HCT116 (cell line): ENCODE measurements at regions of chr7 and their contacts with region 1.

Region 1: DNA sequence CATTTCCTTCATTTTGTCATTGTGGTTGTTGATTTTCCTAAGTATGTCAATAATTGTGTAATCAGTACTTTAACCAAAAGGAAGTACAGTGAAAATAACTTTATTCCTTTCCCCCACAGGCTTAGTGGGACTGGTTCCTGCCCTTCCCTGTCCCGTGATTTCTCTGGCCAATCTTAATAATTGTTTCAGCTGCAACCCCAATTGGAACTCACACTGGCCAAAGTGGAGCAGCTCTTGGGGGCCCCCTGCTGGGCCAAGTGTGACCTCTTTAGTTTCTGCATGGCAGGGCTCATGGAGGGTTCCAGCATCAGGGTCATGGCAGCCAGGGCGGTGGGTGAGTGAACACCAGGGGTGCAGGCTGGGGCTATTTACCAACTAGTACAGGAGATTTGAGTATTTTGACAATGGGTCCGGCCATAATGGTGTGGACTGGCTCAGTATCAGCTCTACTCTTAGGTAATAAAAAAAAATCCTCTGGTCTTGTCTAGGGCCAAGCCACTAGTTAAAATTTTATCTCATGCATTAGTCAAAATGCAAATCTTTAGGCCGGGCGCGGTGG is 31.7 kb downstream of the CYCS start:
- DNase-seq: peak; percentile 70
- ATAC-seq: peak; percentile 88
- H3K4me3 ChIP-seq: no peak overlapping the region
- H3K27ac ChIP-seq: no peak overlapping the region
- H3K4me1 ChIP-seq: peaks cover 2 to 30% of the 10 kb centered on the region in 2 experiments; a peak in 3 of 4 replicates
- H3K27me3 ChIP-seq: no peaks in the 10 kb centered on the region
- CTCF ChIP-seq: peak; percentile 84 to 92 (median 91)
- POLR2A ChIP-seq: no peak
- RAD21 ChIP-seq: peak; percentile 84

Region 2: DNA sequence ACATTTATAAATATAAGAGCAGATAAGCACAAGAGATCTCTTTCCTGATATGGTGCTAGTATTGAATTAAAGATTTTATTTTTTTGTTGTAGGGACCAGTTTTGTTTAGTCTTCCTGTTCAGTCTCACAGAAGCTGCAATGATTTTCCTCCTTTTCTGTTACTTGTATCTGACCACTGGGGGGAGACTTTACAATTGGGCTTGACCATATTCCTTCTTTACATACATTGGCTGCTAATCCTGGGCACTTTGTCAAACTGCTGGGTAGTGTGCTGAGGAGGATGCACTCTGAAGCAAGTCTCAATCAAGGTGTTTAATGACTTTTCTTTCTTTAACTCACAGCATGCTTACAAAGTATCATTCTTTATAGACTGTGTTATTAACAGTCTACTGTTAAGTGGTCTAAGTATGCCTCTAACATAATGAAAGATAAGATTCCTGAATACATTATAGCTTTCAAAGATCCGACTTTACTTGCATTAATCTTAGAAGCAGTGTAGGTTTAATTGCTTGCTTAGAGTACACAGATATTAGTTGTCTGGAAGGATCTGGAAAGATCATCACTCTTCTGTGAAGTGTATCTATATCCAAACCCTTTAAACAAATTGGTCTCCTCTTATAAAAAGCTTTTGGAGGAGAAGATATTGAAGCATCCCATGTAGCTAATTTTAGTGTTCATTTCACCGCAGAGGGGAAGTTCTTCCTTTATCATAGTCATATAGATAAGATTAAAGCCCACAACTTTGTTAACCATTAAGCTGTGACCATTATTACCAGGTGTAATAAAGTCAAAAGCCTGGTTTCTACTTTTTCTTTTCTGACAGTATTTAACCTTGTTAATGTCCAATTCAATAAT is 516.9 kb before region 1 on chr7:
- CTCF ChIA-PET with region 1: no interaction called
- POLR2A ChIA-PET with region 1: no interaction called
- RAD21 ChIA-PET with region 1: no interaction called
- intact Hi-C with region 1: loop called (anchors 5 kb)
- DNase-seq: peak; percentile 48
- ATAC-seq: 0 out of 2 replicates have a peak, but pooled peaks have one; percentile 18
- H3K4me3 ChIP-seq: no peak overlapping the region
- H3K27ac ChIP-seq: no peak overlapping the region
- H3K4me1 ChIP-seq: peaks cover 8 to 24% of the 10 kb centered on the region in 2 experiments; a peak in 3 of 4 replicates
- H3K27me3 ChIP-seq: no peaks in the 10 kb centered on the region
- CTCF ChIP-seq: peak; percentile 59 to 72 (median 67)
- POLR2A ChIP-seq: no peak
- RAD21 ChIP-seq: peak; percentile 62

Region 3: DNA sequence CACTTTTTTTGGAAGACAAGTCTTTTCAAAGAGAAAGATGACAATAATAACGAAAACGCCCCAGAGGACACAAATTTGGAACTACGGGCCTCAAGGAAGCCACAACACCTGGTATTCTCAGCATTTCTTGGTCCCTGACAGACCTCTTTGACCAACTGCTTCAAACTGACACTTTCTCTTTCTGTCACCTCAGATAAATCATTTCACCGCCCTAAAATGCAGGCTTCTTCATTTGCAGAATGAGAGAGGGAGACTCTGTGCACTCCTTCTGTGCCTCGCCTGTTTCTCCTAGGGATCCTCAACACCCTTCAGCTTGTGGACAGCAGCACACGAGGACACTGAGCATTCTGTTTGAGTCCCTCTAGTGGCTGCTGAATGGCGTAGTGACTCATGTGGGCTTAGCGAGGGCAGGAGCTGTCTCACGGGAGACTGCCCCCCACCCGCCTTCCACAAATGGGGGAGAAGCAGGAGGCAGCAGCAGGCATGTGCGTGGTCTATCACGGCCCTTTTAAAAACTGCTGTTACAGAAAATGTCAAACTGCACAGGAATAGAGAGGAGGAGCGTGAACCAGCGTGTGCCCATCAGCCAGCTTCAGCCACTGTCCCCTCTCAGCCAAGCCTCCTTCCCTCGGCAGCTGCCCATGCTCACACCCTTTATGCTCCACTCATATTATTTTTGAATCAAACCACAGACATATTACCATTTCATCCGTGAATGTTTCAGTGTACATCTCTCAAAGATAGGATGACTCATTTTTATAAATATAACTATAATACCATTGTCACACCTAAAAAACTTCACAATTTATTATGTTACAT is 377.5 kb before region 1 on chr7:
- CTCF ChIA-PET with region 1: interaction called, 4 read pairs
- POLR2A ChIA-PET with region 1: no interaction called
- RAD21 ChIA-PET with region 1: no interaction called
- intact Hi-C with region 1: loop called (anchors 10 kb)
- DNase-seq: peak; percentile 22
- ATAC-seq: peak; percentile 91
- H3K4me3 ChIP-seq: no peak overlapping the region
- H3K27ac ChIP-seq: no peak overlapping the region
- H3K4me1 ChIP-seq: peaks cover 0 to under 1% of the 10 kb centered on the region in 2 experiments; a peak in 1 of 4 replicates
- H3K27me3 ChIP-seq: no peaks in the 10 kb centered on the region
- CTCF ChIP-seq: peak; percentile 25 to 66 (median 63); a peak in 4 of 6 replicates
- POLR2A ChIP-seq: no peak
- RAD21 ChIP-seq: peak; percentile 35; the same call in 1 of the 2 replicates

Region 4: GRCh38 chr7:24882989-24883621 is 210.2 kb before region 1 on chr7:
- CTCF ChIA-PET with region 1: interaction called, 4 read pairs
- POLR2A ChIA-PET with region 1: no interaction called
- RAD21 ChIA-PET with region 1: no interaction called
- intact Hi-C with region 1: loop called (anchors 10 kb)
- DNase-seq: no peak
- ATAC-seq: no peak; the same call in 1 of the 2 replicates
- H3K4me3 ChIP-seq: no peak overlapping the region
- H3K27ac ChIP-seq: no peak overlapping the region
- H3K4me1 ChIP-seq: peaks cover 4 to 6% of the 10 kb centered on the region in 2 experiments; a peak in 1 of 4 replicates
- H3K27me3 ChIP-seq: no peaks in the 10 kb centered on the region
- CTCF ChIP-seq: no peak
- POLR2A ChIP-seq: no peak
- RAD21 ChIP-seq: no peak

Region 5: DNA sequence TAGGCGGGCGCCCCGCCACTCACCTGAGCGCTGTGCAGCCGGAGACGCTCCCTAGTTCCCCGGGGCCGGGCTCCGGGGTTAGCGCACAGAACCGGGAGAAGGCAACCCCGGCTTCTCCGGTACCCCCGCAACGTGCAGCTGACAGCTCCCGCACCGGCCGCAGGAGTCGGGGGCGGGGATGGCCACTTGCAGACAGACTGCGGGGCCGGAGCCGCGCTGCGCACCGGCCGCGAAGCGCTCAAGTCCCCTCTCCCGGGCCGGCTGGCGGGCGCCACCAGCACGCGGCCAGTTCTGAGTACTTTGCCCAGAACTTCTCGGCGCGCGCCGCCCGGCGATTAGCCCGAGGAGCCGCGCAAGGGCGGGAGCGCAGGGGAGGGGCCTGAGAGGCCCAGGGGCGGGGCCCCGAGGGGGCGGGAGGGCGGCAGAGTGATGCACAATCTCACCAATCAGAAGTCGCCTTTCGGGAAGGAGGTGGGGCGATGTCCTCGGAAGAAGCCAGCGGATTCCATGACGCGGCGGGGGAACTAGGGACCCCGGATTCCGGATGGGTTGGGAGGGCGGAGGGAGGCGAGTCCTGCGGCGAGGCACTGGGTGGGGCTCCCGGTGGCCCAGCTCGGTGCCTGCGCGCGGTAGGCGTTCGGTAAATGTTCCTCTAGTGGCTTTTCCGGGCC is 113.3 kb before region 1 on chr7 and contains the start of gene OSBPL3:
- CTCF ChIA-PET with region 1: interaction called, 22 read pairs
- POLR2A ChIA-PET with region 1: no interaction called
- RAD21 ChIA-PET with region 1: no interaction called
- intact Hi-C with region 1: loop called (anchors 2 kb)
- DNase-seq: peak; percentile 92
- ATAC-seq: peak; percentile 80
- H3K4me3 ChIP-seq: peak within 1 kb of the TSS; percentile 55 to 66
- H3K27ac ChIP-seq: peak within 1 kb of the TSS; percentile 89
- H3K4me1 ChIP-seq: peaks cover 14 to 51% of the 10 kb centered on the region in 2 experiments
- H3K27me3 ChIP-seq: no peaks in the 10 kb centered on the region
- CTCF ChIP-seq: no peak
- POLR2A ChIP-seq: peak; percentile 24
- RAD21 ChIP-seq: peak; percentile 35
- total RNA-seq, gene OSBPL3: 36.8 TPM

Region 6: DNA sequence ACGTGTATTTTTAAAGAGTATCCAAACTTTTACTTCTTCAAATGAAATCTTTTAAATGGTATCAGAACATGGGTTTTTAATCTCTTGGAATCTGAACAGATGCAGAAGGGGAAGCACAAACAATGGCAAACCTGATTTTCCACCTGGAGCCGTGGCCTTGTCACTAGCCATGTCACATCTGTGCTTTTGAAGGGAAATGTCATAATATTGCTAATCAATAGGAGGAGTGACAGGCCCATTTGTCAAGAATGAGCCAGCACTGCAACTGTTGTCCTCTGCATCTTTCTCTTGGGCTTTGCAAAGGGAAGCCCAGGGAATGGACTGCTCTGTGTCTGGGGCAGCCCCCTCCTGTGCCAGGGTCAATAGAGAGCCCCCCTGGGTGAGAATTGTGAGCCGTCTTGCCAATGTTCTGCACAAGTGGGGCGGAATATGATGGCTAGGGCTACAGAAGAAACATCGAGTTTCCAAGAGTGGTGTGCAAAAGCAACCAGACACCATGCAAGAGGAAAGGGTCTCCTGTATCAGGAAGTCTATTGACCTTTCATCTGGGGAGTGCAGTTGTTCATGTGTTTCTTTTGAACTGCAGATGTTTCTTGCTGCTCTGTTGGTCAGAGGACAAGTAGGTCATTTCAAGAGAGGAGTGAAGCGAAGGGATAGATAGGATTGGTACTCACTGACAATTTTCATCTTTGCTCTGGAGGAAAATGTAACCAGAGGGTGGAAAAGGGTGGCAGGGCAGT is 316.7 kb after region 1 on chr7:
- CTCF ChIA-PET with region 1: no interaction called
- POLR2A ChIA-PET with region 1: no interaction called
- RAD21 ChIA-PET with region 1: no interaction called
- intact Hi-C with region 1: no loop called
- DNase-seq: no peak
- ATAC-seq: no peak
- H3K4me3 ChIP-seq: no peak overlapping the region
- H3K27ac ChIP-seq: no peak overlapping the region
- H3K4me1 ChIP-seq: no peaks in the 10 kb centered on the region
- H3K27me3 ChIP-seq: peaks cover 46% of the 10 kb centered on the region; the same call in 1 of the 2 replicates
- CTCF ChIP-seq: no peak
- POLR2A ChIP-seq: no peak
- RAD21 ChIP-seq: no peak